ENCODE measurements at regions of chr5 and their contacts with region 1.

Region 1: DNA sequence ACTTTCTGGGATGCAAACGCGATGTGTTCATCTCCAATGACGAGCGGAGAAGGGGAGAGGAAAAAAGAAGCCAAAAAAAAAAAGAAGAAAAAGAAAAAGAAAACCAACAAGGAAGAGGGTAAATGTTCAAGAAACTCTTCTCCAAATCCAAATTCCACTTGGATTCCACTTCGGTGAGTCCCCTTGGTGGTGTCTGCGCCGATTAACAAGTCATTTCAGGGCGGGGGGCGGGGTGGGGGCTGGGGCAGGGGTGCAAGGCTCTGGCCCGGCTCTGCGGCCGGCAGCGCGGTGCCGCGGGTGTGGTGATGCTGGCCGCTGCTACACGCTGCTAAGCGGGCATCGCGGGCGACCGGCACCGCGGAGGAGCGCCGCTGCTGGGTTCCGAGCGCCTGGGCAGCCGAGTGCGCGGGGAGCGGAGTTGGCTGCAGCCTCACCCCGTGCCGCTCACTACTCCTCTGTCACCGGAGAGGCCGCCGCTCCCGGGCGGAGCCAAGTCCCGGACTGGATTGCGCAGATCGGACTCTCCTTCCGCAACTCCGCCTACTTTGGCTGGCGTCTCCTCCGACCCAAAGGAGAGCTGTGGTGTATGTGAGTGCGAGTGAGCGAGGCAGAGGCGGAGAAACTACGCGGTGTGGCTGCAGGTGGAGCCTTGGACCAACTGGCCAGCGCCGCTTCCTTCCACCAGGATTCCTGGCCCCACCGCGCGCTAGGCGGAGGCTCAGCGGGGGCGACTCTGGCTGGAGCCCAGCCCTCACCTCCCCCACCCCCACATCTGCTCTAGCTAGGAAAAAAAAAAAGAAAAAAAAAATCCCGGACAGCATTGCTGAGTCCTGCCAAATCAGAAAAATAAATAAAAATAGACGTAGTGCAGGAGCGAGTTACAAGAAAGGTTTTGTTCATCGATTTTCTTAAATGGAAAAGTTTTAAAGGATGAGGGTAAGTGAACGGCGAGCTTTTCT is at the start of gene SEMA6A:
- DNase-seq: peak; percentile 46
- ATAC-seq: peak; percentile 69
- H3K4me3 Mint-ChIP-seq: peak within 1 kb of the TSS; percentile 83
- H3K27ac Mint-ChIP-seq: no peak within 1 kb of the TSS
- H3K4me1 Mint-ChIP-seq: peaks cover 42% of the 10 kb centered on the region
- H3K27me3 Mint-ChIP-seq: peaks cover 54% of the 10 kb centered on the region
- CTCF ChIP-seq: no peak
- total RNA-seq, gene SEMA6A: 0.20 TPM in 2 replicates

Region 2: GRCh38 chr5:116084871-116085715 is 489.6 kb before region 1 on chr5 and contains the start of gene COMMD10:
- CTCF ChIA-PET with region 1: no interaction called
- POLR2A ChIA-PET with region 1: no interaction called
- intact Hi-C with region 1: loop called (anchors 10 kb)
- DNase-seq: peak; percentile 72
- ATAC-seq: peak; percentile 91
- H3K4me3 Mint-ChIP-seq: peak within 1 kb of the TSS; percentile 95
- H3K27ac Mint-ChIP-seq: peak within 1 kb of the TSS; percentile 96
- H3K4me1 Mint-ChIP-seq: peaks cover 36% of the 10 kb centered on the region
- H3K27me3 Mint-ChIP-seq: no peaks in the 10 kb centered on the region
- CTCF ChIP-seq: no peak
- total RNA-seq, gene COMMD10: 35.7 and 44.4 TPM in 2 replicates

Region 3: GRCh38 chr5:116137544-116138378 is 436.9 kb before region 1 on chr5:
- CTCF ChIA-PET with region 1: no interaction called
- POLR2A ChIA-PET with region 1: no interaction called
- intact Hi-C with region 1: loop called (anchors 5 kb)
- DNase-seq: no peak
- ATAC-seq: no peak
- H3K4me3 Mint-ChIP-seq: no peak overlapping the region
- H3K27ac Mint-ChIP-seq: no peak overlapping the region
- H3K4me1 Mint-ChIP-seq: peaks cover 15% of the 10 kb centered on the region
- H3K27me3 Mint-ChIP-seq: no peaks in the 10 kb centered on the region
- CTCF ChIP-seq: no peak

Region 4: GRCh38 chr5:116554764-116555163 is 19.9 kb before region 1 on chr5:
- CTCF ChIA-PET with region 1: no interaction called
- POLR2A ChIA-PET with region 1: no interaction called
- intact Hi-C with region 1: no loop called
- DNase-seq: no peak
- ATAC-seq: no peak
- H3K4me3 Mint-ChIP-seq: no peak overlapping the region
- H3K27ac Mint-ChIP-seq: no peak overlapping the region
- H3K4me1 Mint-ChIP-seq: peaks cover 10% of the 10 kb centered on the region
- H3K27me3 Mint-ChIP-seq: peaks cover 1% of the 10 kb centered on the region
- CTCF ChIP-seq: no peak

Region 5: GRCh38 chr5:116600876-116601275 is 26.2 kb after region 1 on chr5:
- CTCF ChIA-PET with region 1: no interaction called
- POLR2A ChIA-PET with region 1: no interaction called
- intact Hi-C with region 1: no loop called
- DNase-seq: no peak
- ATAC-seq: no peak
- H3K4me3 Mint-ChIP-seq: no peak overlapping the region
- H3K27ac Mint-ChIP-seq: no peak overlapping the region
- H3K4me1 Mint-ChIP-seq: no peaks in the 10 kb centered on the region
- H3K27me3 Mint-ChIP-seq: peaks cover 13% of the 10 kb centered on the region
- CTCF ChIP-seq: no peak

Region 6: DNA sequence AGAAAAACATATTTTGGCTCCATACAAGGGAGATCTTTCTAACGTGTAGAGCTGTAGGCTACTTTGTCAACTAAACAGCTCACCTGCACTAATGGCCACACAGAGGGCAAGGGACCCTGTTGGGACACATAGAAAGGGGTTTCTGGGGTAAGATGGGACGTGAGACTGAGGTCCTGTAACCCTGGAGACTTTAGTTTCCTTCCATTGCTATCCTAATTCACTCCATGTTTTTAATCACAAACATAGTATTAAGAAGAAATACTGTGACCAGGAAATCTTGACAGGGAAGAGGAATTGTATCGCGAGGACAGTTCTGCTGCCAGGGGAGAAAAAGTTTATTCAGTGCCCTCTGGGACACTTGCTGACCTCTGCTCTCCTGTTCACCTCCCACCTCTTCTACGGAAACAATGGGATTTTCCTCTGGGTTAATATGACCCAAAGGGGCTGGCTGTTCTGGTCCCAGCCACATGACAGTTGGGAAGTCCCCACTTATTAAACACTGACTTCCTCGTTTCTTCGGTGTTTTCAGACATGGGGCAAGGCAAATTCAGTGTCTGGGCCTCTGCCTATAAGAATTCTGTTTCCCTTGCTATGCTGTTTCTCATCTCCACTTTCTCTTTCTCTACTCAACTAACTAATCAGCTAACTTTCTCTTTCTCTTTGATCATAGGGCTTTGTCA is 106.8 kb after region 1 on chr5:
- CTCF ChIA-PET with region 1: no interaction called
- POLR2A ChIA-PET with region 1: interaction called, 5 read pairs
- intact Hi-C with region 1: loop called (anchors 2 kb)
- DNase-seq: no peak
- ATAC-seq: peak; percentile 84
- H3K4me3 Mint-ChIP-seq: peak overlapping the region; percentile 36
- H3K27ac Mint-ChIP-seq: peak overlapping the region; percentile 67
- H3K4me1 Mint-ChIP-seq: peaks cover 9% of the 10 kb centered on the region
- H3K27me3 Mint-ChIP-seq: no peaks in the 10 kb centered on the region
- CTCF ChIP-seq: no peak

Region 7: GRCh38 chr5:116756531-116756930 is 181.9 kb after region 1 on chr5:
- CTCF ChIA-PET with region 1: no interaction called
- POLR2A ChIA-PET with region 1: no interaction called
- intact Hi-C with region 1: loop called (anchors 2 kb)
- DNase-seq: no peak
- ATAC-seq: no peak
- H3K4me3 Mint-ChIP-seq: no peak overlapping the region
- H3K27ac Mint-ChIP-seq: no peak overlapping the region
- H3K4me1 Mint-ChIP-seq: no peaks in the 10 kb centered on the region
- H3K27me3 Mint-ChIP-seq: peaks cover 3% of the 10 kb centered on the region
- CTCF ChIP-seq: no peak

Region 8: GRCh38 chr5:116947691-116948528 is 373.3 kb after region 1 on chr5:
- CTCF ChIA-PET with region 1: no interaction called
- POLR2A ChIA-PET with region 1: no interaction called
- intact Hi-C with region 1: loop called (anchors 1 kb)
- DNase-seq: peak; percentile 31
- ATAC-seq: peak; percentile 79
- H3K4me3 Mint-ChIP-seq: no peak overlapping the region
- H3K27ac Mint-ChIP-seq: no peak overlapping the region
- H3K4me1 Mint-ChIP-seq: peaks cover 5% of the 10 kb centered on the region
- H3K27me3 Mint-ChIP-seq: no peaks in the 10 kb centered on the region
- CTCF ChIP-seq: peak; percentile 47

Region 9: GRCh38 chr5:117454716-117455596 is 880.3 kb after region 1 on chr5:
- CTCF ChIA-PET with region 1: no interaction called
- POLR2A ChIA-PET with region 1: no interaction called
- intact Hi-C with region 1: loop called (anchors 2 kb)
- DNase-seq: peak; percentile 30
- ATAC-seq: peak; percentile 81
- H3K4me3 Mint-ChIP-seq: peak overlapping the region; percentile 59
- H3K27ac Mint-ChIP-seq: no peak overlapping the region
- H3K4me1 Mint-ChIP-seq: peaks cover 7% of the 10 kb centered on the region
- H3K27me3 Mint-ChIP-seq: peaks cover 4% of the 10 kb centered on the region
- CTCF ChIP-seq: peak; percentile 50

Measured in activated B cell treated with CpG ODN at 0.5 μM for 24 hours (primary cell).